Ovary (tissue), 10 donors: ENCODE measurements at regions of chr17 and their contacts with region 1.

Region 1: DNA sequence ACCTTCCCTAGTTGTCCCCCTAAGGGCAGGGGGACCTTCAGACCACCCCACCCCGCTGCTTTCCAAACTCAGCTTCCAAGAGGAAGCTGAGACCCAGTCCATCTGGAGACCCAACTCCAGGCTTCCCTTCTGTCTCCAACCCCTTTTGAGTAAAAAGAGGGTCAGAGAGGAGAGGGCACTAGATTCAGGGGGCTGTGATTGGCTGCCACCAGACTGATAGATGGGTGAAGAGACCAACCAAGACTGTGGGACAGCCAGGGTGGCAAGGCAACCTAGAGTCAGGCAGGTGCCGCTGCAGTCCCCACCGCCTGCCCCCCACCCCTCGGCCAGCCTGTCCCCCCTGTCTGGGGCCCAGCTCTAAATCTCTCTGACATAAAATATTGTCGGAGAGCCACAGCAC is 92.5 kb downstream of the SDK2 start:
- DNase-seq: no peak
- H3K4me3 ChIP-seq: no peak overlapping the region
- H3K27ac ChIP-seq: no peak overlapping the region
- H3K4me1 ChIP-seq: no peaks in the 10 kb centered on the region
- H3K27me3 ChIP-seq: no peaks in the 10 kb centered on the region
- CTCF ChIP-seq: no peak
- EP300 ChIP-seq: no peak
- POLR2A ChIP-seq: no peak

Region 2: DNA sequence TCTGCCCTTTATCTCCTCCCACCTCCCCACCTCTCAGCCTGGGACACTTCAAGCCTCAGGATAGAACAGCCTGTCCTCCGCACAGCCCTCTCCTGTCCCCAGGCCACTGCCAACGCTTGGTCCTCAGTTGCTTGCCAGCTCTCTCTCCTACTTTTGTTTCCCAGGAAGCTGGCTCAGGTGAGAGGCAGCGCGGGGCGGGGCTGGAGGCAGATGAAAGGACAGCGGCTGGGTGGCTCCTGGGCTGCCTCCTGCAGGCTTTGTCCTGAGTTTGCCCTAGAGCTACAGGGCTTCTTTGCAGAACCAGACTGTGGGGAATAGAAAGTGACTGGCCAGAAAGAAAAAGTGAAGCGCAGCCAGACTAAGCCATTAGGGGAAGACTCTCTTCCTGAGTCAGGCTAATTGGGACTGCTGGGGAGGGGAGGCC is 191.8 kb before region 1 on chr17:
- intact Hi-C with region 1: no loop called
- DNase-seq: no peak
- H3K4me3 ChIP-seq: no peak overlapping the region
- H3K27ac ChIP-seq: no peak overlapping the region
- H3K4me1 ChIP-seq: peaks cover 2% of the 10 kb centered on the region
- H3K27me3 ChIP-seq: no peaks in the 10 kb centered on the region
- CTCF ChIP-seq: no peak
- EP300 ChIP-seq: no peak
- POLR2A ChIP-seq: no peak

Region 3: DNA sequence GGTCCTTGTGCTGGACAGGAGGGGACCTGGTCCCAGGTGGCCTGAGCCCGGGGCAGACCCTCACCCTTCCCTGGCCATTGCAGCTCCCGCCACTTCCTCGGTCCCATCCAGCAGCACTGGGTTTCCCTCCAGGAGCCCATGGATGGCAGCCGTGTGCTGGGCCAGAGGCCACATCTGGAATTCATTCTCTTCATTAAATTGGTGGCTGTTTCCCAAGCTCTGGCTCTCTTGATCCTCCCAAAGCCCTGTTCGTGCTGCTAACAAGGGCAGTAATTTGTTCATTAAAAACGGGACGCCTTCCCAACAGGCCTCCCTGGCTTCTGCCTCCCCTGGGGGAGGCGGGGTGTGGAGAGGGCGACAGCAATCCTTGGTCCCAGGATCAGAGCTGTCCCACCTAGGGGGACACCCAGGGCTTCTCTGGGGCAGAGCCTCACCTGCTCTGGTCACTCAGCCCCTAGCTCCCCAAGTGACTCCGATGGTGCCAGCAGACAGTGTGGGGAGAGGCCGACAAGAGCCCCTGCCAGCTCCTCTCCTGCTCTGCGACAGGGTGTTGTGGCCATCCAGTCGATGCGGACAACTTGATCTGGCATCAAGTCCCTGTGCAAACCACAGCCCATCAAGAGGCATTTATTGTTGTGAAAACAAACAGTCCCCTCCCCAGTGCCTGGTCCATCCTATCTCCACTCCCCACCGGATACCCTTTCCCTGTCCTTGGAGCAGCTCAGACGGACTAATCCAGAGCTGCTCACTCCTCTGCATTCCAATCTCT is 48.5 kb after region 1 on chr17:
- intact Hi-C with region 1: loop called in 1 of 4 experiments (anchors 5 kb)
- DNase-seq: no peak
- H3K4me3 ChIP-seq: no peak overlapping the region
- H3K27ac ChIP-seq: no peak overlapping the region
- H3K4me1 ChIP-seq: peaks cover 5% of the 10 kb centered on the region
- H3K27me3 ChIP-seq: no peaks in the 10 kb centered on the region
- CTCF ChIP-seq: no peak
- EP300 ChIP-seq: no peak
- POLR2A ChIP-seq: no peak